ENCODE measurements at regions of chr6 and their contacts with region 1.

Region 1: DNA sequence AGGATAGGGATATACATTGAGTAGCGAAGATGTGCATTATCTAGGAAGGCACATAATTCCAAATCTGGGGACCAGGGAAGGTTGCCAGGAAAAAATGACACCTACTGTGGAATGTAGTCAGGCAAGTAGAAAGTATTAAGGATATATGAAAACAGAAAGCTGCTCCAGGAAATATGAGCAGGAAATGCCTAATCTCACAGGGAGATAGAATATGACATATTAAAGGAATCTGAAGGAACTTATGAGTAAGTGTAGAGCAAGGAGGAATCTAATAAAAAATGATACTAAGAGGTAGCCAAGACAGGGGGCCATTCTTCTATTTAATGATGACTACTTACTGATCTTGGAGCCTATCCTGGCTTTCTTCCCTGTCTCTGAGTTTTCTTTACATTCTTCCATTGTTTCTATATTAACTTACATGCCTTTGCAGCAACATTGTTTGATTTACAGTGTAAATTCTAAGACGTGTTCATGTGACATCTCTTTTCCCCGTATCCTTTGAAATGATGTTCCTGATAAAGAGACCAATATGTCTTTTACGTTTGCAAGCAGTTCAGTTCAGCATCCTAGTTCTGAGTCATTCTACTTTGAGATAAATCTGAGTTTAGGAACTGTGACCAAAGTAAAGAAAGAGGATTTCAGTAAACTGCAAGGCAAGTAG is 58.6 kb downstream of the TINAG start:
- DNase-seq: no peak
- ATAC-seq: no peak

Region 2: GRCh38 chr6:54191461-54191860 is 175.3 kb before region 1 on chr6:
- intact Hi-C with region 1: no loop called
- DNase-seq: no peak
- ATAC-seq: peak; percentile 17

Region 3: GRCh38 chr6:54805077-54805476 is 438.3 kb after region 1 on chr6:
- intact Hi-C with region 1: loop called (anchors 5 kb)
- DNase-seq: no peak
- ATAC-seq: no peak